ENCODE measurements at regions of chr1 and their contacts with region 1.

Region 1: DNA sequence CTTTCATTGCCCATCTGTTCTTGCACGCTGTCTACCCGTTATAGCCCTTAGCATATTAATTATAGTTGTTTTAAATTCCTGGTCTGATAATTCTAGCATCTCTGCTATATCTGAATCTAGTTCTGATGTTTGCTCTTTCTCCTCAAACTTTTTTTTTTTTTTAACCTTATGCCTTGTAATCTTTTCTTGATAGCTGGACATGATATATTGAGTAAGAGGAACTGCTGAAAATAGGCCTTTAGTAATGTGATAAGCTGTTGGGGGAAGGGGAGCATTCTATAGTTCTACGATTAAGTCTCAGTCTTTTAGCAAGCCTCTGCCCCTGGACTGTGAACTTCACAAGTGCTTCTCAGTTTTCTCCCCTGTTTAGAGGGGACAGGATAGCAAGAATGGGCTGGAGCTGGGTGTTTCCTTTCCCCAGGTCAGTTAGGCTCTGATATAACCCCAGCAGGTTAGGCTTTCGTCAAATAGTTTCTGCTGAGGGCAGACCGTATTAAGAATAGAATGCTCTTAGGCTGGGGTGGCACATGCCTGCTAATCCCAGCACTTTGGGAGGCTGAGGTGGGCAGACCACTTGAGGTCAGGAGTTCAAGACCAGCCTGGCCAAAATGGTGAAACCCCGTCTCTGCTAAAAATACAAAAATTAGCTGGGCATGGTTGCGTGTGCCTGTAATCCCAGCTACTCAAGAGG is 62.2 kb downstream of the ZFYVE9 start:
- DNase-seq: peak in 2 of 4 experiments; percentile 27 to 69
- ATAC-seq: peak; percentile 83
- H3K4me3 ChIP-seq: no peak overlapping the region
- H3K27ac ChIP-seq: peak overlapping the region; percentile 71
- H3K4me1 ChIP-seq: peaks cover 11 to 22% of the 10 kb centered on the region in 2 experiments
- H3K27me3 ChIP-seq: no peaks in the 10 kb centered on the region
- CTCF ChIP-seq: no peak
- EP300 ChIP-seq: peak; percentile 74
- POLR2A ChIP-seq: no peak
- RAD21 ChIP-seq: peak in 1 of 2 experiments; percentile 22; a peak in 1 of 4 replicates

Region 2: DNA sequence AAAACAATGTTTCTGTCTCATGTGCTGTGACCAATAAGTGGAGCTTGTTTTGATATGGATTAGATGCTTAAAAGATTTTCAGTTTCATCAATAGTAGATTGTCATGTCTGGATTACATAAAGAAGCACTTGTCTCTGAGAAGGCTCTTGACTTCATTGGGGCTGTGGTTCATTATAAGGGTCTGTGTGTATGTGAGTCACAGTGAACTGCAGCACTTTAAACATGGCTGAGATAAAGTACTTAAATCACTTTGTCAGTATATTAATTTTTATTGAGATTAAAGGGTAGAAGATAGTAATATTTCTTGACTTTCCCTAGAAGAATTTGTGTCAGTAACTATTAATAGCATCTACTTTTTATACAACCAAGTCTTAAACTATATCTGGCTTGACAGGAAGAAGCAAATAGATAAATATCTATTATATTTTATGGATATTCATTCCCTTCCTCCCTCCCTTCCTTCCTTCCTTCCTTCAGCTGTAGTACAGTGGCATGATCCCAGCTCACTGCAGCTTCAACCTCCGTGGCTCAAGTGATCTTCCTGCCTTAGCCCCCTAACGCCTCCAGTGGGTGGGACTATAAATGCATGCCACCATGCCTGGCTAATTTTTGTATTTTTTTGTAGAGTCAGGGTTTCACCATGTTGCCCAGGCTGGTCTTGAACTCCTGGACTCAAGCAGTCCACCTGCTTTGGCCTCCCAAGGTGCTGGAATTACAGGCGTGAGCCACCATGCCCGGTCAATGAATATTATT is 13.4 kb before region 1 on chr1:
- CTCF ChIA-PET with region 1: no interaction called
- POLR2A ChIA-PET with region 1: no interaction called
- in situ Hi-C with region 1: no loop called
- intact Hi-C with region 1: loop called (anchors 2 kb)
- DNase-seq: peak in 1 of 4 experiments; percentile 25
- ATAC-seq: peak; percentile 82
- H3K4me3 ChIP-seq: no peak overlapping the region
- H3K27ac ChIP-seq: no peak overlapping the region
- H3K4me1 ChIP-seq: peaks cover 3 to 9% of the 10 kb centered on the region in 2 experiments; a peak in 3 of 5 replicates
- H3K27me3 ChIP-seq: no peaks in the 10 kb centered on the region
- CTCF ChIP-seq: peak in 2 of 3 experiments; percentile 25 to 29; a peak in 1 of 6 replicates
- EP300 ChIP-seq: no peak
- POLR2A ChIP-seq: no peak
- RAD21 ChIP-seq: no peak

Region 3: DNA sequence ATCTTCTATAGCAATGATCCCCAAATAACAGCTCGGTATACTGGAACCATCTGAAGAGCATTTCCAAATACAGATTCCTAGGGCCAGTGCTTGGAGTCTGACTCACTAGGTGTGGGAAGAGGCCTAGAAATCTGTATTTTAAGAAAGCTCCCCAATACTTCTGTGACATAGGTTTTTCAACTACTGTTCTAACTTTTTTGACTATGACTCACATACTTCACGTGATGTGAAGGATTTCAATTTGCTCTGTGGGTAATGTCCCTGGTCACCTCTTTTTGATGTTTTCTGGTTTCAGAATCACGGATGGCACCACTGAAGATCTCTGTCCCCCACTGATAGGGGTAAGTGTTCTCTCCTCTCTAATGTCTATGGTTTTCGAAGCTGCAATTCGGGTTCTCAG is 189.1 kb after region 1 on chr1:
- CTCF ChIA-PET with region 1: no interaction called
- POLR2A ChIA-PET with region 1: no interaction called
- in situ Hi-C with region 1: no loop called
- intact Hi-C with region 1: no loop called
- DNase-seq: no peak
- ATAC-seq: 0 out of 3 replicates have a peak, but pooled peaks have one; percentile 15
- H3K4me3 ChIP-seq: no peak overlapping the region
- H3K27ac ChIP-seq: no peak overlapping the region
- H3K4me1 ChIP-seq: no peaks in the 10 kb centered on the region
- H3K27me3 ChIP-seq: no peaks in the 10 kb centered on the region
- CTCF ChIP-seq: no peak
- EP300 ChIP-seq: no peak
- POLR2A ChIP-seq: no peak
- RAD21 ChIP-seq: no peak